ENCODE measurements at regions of chr5 and their contacts with region 1.

Region 1: DNA sequence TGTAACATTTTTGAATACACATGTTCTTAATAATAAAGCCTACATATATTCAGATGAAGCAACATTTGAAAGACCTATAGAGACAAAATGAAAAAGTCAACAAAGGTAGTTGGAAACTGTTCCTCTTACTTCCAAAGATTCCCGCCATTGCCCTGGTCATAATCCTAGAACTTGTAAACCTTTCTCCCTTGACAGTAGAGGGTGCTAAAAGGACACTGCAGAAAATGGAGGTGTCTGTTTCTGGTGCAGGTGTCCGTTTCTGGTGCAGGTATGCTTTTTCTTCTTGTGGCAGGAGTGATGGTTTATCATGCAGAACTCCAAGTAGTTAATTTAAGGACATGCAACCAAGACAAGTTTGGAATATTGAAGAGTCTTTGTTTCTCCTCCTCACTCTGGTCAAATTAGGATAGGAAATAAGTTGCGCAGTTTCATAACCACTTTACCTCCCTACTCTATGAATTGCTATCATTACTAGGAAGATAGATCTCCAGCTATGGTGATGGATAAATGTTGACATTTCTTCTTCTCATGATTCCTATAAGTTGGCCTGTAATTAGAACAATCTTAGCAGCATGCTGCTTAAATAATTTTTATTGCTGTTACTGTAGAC is 56.0 kb upstream of the FAM174A start:
- DNase-seq: peak; percentile 50
- H3K4me3 ChIP-seq: no peak overlapping the region
- H3K27ac ChIP-seq: no peak overlapping the region
- H3K4me1 ChIP-seq: no peaks in the 10 kb centered on the region
- H3K27me3 ChIP-seq: no peaks in the 10 kb centered on the region
- CTCF ChIP-seq: peak; percentile 62 to 87

Region 2: DNA sequence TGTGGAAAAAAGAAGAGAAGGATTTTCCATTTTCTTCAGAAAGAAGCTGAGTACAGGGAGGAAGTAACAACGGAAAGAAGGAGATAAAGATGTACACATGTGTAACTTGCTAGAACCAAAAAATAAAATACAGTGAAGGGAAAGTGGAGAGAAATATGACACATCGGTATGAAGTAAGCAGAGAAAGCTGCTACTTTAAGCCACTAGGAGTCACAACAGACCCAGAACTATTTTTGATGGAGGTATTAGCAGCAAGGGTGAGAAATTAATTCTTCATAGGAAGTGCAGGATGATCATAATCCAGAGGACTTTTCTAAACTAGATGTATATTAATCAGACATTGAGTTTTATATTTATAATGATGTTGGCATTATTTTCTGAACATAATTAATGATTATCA is 144.5 kb after region 1 on chr5:
- CTCF ChIA-PET with region 1: no interaction called
- dilution Hi-C with region 1: no loop called
- in situ Hi-C with region 1: no loop called
- intact Hi-C with region 1: loop called (anchors 1 kb)
- DNase-seq: peak; percentile 24
- H3K4me3 ChIP-seq: no peak overlapping the region
- H3K27ac ChIP-seq: no peak overlapping the region
- H3K4me1 ChIP-seq: no peaks in the 10 kb centered on the region
- H3K27me3 ChIP-seq: no peaks in the 10 kb centered on the region
- CTCF ChIP-seq: peak; percentile 44 to 68

Region 3: DNA sequence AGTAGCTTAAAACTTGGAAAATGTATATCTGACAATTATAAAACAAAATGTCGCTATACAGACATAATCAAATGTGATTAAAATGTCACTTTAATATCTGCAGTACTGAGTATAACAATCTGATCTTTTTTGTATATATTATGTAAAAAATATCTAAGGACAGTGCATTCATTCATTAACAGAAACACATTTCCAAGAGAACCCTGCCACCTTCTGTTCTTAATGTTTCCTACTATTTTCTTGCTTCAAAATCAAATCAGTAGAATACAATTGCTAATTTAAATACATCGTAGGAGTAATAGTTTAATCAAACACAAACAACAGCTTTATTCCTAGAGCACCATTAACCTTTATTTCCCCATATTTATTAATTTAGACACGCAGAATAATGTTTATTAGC is 566.5 kb after region 1 on chr5:
- CTCF ChIA-PET with region 1: no interaction called
- dilution Hi-C with region 1: no loop called
- in situ Hi-C with region 1: no loop called
- intact Hi-C with region 1: loop called (anchors 2 kb)
- DNase-seq: no peak
- H3K4me3 ChIP-seq: no peak overlapping the region
- H3K27ac ChIP-seq: no peak overlapping the region
- H3K4me1 ChIP-seq: no peaks in the 10 kb centered on the region
- H3K27me3 ChIP-seq: peaks cover 3% of the 10 kb centered on the region
- CTCF ChIP-seq: peak in 1 of 2 donors; percentile 25

Region 4: DNA sequence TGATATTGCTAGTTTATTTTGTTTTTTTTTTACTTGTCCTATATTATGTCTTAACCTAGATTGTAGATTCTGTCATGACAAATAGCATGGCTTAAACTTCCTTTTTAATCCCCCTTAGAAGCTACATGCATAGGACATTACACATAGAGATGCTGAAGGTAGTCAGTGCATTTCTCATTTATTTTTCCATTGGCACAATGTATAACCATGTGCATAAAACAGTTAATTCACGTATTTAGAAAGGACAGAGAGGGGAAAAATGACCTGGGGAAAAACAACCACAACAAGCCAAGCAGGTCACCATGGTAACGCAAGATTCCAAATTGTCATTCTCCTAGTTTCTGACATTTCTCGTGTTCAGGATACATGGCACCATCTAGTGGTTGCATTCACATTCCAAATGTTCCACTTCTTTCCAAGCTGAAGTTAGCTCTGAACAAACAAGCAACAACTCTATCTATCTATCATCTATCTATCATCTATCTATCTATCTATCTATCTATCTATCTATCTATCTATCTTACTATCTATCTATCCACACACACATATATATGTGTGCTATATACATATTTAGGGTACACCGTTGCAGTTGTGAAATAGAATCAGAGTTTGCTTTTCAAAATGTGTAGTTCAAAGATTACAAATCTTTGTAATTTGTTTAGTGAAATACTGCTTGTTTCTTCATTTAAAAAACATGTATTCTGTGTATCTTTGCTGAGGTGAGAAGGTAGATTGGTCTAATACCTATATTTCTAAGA is 911.1 kb after region 1 on chr5:
- CTCF ChIA-PET with region 1: no interaction called
- dilution Hi-C with region 1: no loop called
- in situ Hi-C with region 1: loop called in 1 of 2 experiments (anchors 25 kb)
- intact Hi-C with region 1: loop called (anchors 1 kb)
- DNase-seq: peak; percentile 26
- H3K4me3 ChIP-seq: no peak overlapping the region
- H3K27ac ChIP-seq: no peak overlapping the region
- H3K4me1 ChIP-seq: no peaks in the 10 kb centered on the region
- H3K27me3 ChIP-seq: no peaks in the 10 kb centered on the region
- CTCF ChIP-seq: peak; percentile 55 to 67

Region 5: DNA sequence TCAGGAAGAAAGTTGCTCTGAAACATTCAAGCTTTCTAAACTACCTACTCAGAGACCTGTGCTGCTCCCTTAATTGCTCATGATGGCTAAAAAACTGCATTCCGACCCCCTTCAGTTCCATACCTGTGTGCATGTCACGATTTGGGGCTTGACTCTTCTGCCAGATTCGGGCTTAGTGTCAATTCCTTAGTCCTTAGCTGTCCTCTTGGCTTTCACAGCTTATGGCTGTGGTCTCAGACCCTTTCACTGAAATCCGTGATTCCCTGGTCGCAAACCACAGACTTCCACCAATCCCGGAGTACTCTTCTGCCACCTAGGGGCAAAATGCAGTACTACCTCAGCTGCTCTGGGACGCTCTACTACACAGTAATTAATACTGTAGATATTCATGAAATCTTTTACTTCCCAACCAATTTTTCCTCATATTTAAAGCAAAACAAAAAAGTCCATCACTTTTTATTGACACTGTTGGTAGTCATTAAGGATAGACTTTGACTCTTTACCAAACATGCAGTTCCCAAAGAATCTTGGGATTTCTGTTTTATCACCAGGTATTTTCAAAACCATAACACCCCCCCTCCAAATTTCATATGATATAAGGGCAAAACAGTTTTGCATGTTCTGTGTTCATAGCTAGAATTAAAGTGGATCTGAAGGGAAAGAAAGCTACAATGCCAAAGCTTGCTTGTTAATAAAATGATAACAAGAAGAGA is 1199.5 kb after region 1 on chr5:
- CTCF ChIA-PET with region 1: no interaction called
- dilution Hi-C with region 1: no loop called
- in situ Hi-C with region 1: no loop called
- intact Hi-C with region 1: loop called (anchors 2 kb)
- DNase-seq: peak; percentile 32
- H3K4me3 ChIP-seq: no peak overlapping the region
- H3K27ac ChIP-seq: no peak overlapping the region
- H3K4me1 ChIP-seq: no peaks in the 10 kb centered on the region
- H3K27me3 ChIP-seq: no peaks in the 10 kb centered on the region
- CTCF ChIP-seq: peak; percentile 90

Measured in mammary epithelial cell (primary cell).